ENCODE measurements at regions of chr10 and their contacts with region 1.

Region 1: GRCh38 chr10:69418052-69418752 is 1.5 kb upstream of the TACR2 start:
- DNase-seq: no peak
- ATAC-seq: no peak
- H3K4me3 Mint-ChIP-seq: no peak overlapping the region
- H3K27ac Mint-ChIP-seq: peak overlapping the region in 1 of 10 donors; percentile 79
- H3K4me1 Mint-ChIP-seq: peaks cover 5 to 17% (median 11%) of the 10 kb centered on the region in 4 donors
- H3K27me3 Mint-ChIP-seq: peaks cover 0 to 4% (median under 1%) of the 10 kb centered on the region in 5 donors

Region 2: DNA sequence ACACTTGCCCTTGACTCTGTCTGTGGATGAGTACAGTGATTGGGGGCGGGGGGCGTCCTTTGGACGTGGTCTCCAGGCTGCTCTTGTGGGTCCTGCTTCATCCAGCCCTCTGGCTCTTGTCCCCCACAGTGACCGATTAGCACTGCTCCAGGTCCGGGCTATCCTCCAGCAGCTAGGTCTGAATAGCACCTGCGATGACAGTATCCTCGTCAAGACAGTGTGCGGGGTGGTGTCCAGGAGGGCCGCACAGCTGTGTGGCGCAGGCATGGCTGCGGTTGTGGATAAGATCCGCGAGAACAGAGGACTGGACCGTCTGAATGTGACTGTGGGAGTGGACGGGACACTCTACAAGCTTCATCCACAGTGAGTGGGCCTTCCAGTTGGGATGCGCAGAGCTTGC is 19.7 kb before region 1 on chr10:
- POLR2A ChIA-PET with region 1: interaction called, 10 read pairs
- DNase-seq: no peak
- ATAC-seq: no peak
- H3K4me3 Mint-ChIP-seq: no peak overlapping the region
- H3K27ac Mint-ChIP-seq: peak overlapping the region in 2 of 10 donors; percentile 56 to 83
- H3K4me1 Mint-ChIP-seq: peaks cover 0 to 2% (median 0%) of the 10 kb centered on the region in 4 donors
- H3K27me3 Mint-ChIP-seq: no peaks in the 10 kb centered on the region

Measured in naive thymus-derived CD8-positive, alpha-beta T cell (primary cell).